B cell (primary cell): ENCODE measurements at regions of chr9 and their contacts with region 1.

Region 1: GRCh38 chr9:130018260-130018659 is 24.7 kb downstream of the FNBP1 start:
- DNase-seq: no peak
- ATAC-seq: no peak
- H3K4me3 ChIP-seq: no peak overlapping the region
- H3K4me3 Mint-ChIP-seq: peak overlapping the region; percentile 46
- H3K27ac ChIP-seq: peak overlapping the region in 1 of 2 donors; percentile 95
- H3K27ac Mint-ChIP-seq: peak overlapping the region; percentile 34
- H3K4me1 ChIP-seq: peaks cover 50 to 67% of the 10 kb centered on the region in 2 donors
- H3K4me1 Mint-ChIP-seq: peaks cover 69% of the 10 kb centered on the region
- H3K27me3 ChIP-seq: no peaks in the 10 kb centered on the region
- H3K27me3 Mint-ChIP-seq: no peaks in the 10 kb centered on the region
- CTCF ChIP-seq: no peak

Region 2: GRCh38 chr9:129938291-129938979 is 79.8 kb before region 1 on chr9:
- CTCF ChIA-PET with region 1: no interaction called
- POLR2A ChIA-PET with region 1: interaction called, 14 read pairs
- intact Hi-C with region 1: no loop called
- DNase-seq: no peak
- ATAC-seq: no peak
- H3K4me3 ChIP-seq: no peak overlapping the region
- H3K4me3 Mint-ChIP-seq: no peak overlapping the region
- H3K27ac ChIP-seq: peak overlapping the region in 1 of 2 donors; percentile 33
- H3K27ac Mint-ChIP-seq: peak overlapping the region; percentile 16
- H3K4me1 ChIP-seq: peaks cover 0 to 16% of the 10 kb centered on the region in 2 donors
- H3K4me1 Mint-ChIP-seq: peaks cover 22% of the 10 kb centered on the region
- H3K27me3 ChIP-seq: no peaks in the 10 kb centered on the region
- H3K27me3 Mint-ChIP-seq: no peaks in the 10 kb centered on the region
- CTCF ChIP-seq: no peak